MCF 10A (cell line): ENCODE measurements at regions of chr6 and their contacts with region 1.

Region 1: GRCh38 chr6:33082702-33083101 is 6.9 kb downstream of the HLA-DPB1 start:
- DNase-seq: peak; percentile 47
- H3K4me3 Mint-ChIP-seq: no peak overlapping the region
- H3K27ac Mint-ChIP-seq: no peak overlapping the region
- H3K4me1 Mint-ChIP-seq: no peaks in the 10 kb centered on the region
- H3K27me3 Mint-ChIP-seq: peaks cover 100% of the 10 kb centered on the region
- CTCF ChIP-seq: peak; percentile 30

Region 2: DNA sequence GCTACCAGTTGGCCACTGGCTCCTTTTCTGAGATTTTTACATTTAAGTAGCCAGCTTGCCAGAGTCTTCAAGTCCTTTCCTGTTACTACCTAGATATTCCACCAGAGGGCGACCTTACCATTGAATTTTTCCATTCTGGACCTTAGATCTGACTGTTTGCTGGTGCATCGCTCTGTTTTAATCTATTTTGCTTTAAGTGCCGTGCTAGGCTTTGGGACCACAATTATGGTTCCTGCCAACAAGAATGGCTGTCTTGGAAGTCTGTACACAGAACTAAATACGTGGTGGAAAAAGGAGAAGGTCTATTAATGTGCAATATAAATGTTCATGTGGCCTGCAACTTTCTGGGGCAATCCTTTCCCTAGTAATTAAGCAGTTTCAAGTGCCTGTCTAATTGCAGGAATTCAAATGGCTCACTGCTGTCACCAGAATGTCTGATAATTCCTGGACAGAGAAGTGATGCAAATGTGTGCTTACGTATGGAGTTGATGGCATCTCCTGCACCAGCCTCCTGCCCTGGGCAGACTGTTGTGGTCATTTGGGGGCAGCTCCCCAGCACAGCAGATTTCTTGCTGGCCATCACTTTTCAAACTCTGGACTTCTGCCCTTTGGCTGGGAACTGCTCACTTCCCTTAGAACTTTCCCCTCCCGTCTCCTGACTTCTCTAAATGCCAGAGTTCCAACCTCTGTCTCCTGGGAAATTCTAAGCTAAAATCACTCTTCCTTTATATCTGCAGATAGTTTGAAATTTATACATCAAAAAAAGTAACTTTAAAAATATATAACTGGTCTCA is 67.7 kb before region 1 on chr6:
- CTCF ChIA-PET with region 1: no interaction called
- POLR2A ChIA-PET with region 1: no interaction called
- intact Hi-C with region 1: loop called (anchors 1 kb)
- DNase-seq: peak; percentile 72
- H3K4me3 Mint-ChIP-seq: no peak overlapping the region
- H3K27ac Mint-ChIP-seq: no peak overlapping the region
- H3K4me1 Mint-ChIP-seq: no peaks in the 10 kb centered on the region
- H3K27me3 Mint-ChIP-seq: peaks cover 98% of the 10 kb centered on the region
- CTCF ChIP-seq: peak; percentile 62